Caco-2 (cell line): ENCODE measurements at regions of chr6 and their contacts with region 1.

Region 1: DNA sequence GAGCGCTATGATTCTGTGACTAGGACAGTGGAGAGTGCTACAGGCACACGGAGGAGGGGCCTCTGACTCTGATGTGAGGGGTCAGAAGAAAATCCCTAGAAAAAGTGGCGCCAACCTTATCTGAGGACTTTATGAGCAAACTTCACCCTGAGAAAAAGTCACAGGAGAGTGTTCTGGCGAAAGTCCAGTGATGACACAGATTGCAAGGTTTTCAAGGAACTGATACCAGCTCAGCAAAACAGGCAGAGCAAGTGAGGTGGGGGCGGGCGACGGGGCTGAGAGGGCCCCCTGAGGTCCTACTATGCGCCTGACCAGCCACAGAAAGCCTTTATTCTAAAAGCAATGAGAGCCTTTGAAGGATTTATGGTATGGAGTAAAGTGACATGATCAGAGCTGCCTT is 73.3 kb downstream of the SLC22A23 start:
- DNase-seq: peak; percentile 80
- H3K4me3 ChIP-seq: no peak overlapping the region
- H3K4me3 Mint-ChIP-seq: peak overlapping the region; percentile 10
- H3K27ac Mint-ChIP-seq: peak overlapping the region; percentile 73
- H3K4me1 ChIP-seq: peaks cover 70% of the 10 kb centered on the region
- H3K4me1 Mint-ChIP-seq: peaks cover 61% of the 10 kb centered on the region
- H3K27me3 ChIP-seq: no peaks in the 10 kb centered on the region
- H3K27me3 Mint-ChIP-seq: no peaks in the 10 kb centered on the region
- CTCF ChIP-seq: no peak

Region 2: GRCh38 chr6:3351105-3351676 is 32.3 kb before region 1 on chr6:
- CTCF ChIA-PET with region 1: no interaction called
- POLR2A ChIA-PET with region 1: no interaction called
- intact Hi-C with region 1: no loop called
- DNase-seq: no peak
- H3K4me3 ChIP-seq: no peak overlapping the region
- H3K4me3 Mint-ChIP-seq: no peak overlapping the region
- H3K27ac Mint-ChIP-seq: no peak overlapping the region
- H3K4me1 ChIP-seq: peaks cover 2% of the 10 kb centered on the region
- H3K4me1 Mint-ChIP-seq: peaks cover 7% of the 10 kb centered on the region
- H3K27me3 ChIP-seq: no peaks in the 10 kb centered on the region
- H3K27me3 Mint-ChIP-seq: no peaks in the 10 kb centered on the region
- CTCF ChIP-seq: no peak

Region 3: GRCh38 chr6:3393836-3394202 is 10.3 kb after region 1 on chr6:
- CTCF ChIA-PET with region 1: no interaction called
- POLR2A ChIA-PET with region 1: no interaction called
- intact Hi-C with region 1: loop called (anchors 1 kb)
- DNase-seq: no peak
- H3K4me3 ChIP-seq: no peak overlapping the region
- H3K4me3 Mint-ChIP-seq: no peak overlapping the region
- H3K27ac Mint-ChIP-seq: no peak overlapping the region
- H3K4me1 ChIP-seq: peaks cover 44% of the 10 kb centered on the region
- H3K4me1 Mint-ChIP-seq: peaks cover 14% of the 10 kb centered on the region
- H3K27me3 ChIP-seq: no peaks in the 10 kb centered on the region
- H3K27me3 Mint-ChIP-seq: no peaks in the 10 kb centered on the region
- CTCF ChIP-seq: no peak

Region 4: GRCh38 chr6:3403238-3404173 is 20.0 kb after region 1 on chr6:
- CTCF ChIA-PET with region 1: interaction called, 5 read pairs
- POLR2A ChIA-PET with region 1: interaction called, 14 read pairs
- intact Hi-C with region 1: loop called (anchors 1 kb)
- DNase-seq: peak; percentile 92 to 95
- H3K4me3 ChIP-seq: no peak overlapping the region
- H3K4me3 Mint-ChIP-seq: peak overlapping the region; percentile 63
- H3K27ac Mint-ChIP-seq: peak overlapping the region; percentile 88
- H3K4me1 ChIP-seq: peaks cover 90% of the 10 kb centered on the region
- H3K4me1 Mint-ChIP-seq: peaks cover 63% of the 10 kb centered on the region
- H3K27me3 ChIP-seq: no peaks in the 10 kb centered on the region
- H3K27me3 Mint-ChIP-seq: no peaks in the 10 kb centered on the region
- CTCF ChIP-seq: no peak

Region 5: DNA sequence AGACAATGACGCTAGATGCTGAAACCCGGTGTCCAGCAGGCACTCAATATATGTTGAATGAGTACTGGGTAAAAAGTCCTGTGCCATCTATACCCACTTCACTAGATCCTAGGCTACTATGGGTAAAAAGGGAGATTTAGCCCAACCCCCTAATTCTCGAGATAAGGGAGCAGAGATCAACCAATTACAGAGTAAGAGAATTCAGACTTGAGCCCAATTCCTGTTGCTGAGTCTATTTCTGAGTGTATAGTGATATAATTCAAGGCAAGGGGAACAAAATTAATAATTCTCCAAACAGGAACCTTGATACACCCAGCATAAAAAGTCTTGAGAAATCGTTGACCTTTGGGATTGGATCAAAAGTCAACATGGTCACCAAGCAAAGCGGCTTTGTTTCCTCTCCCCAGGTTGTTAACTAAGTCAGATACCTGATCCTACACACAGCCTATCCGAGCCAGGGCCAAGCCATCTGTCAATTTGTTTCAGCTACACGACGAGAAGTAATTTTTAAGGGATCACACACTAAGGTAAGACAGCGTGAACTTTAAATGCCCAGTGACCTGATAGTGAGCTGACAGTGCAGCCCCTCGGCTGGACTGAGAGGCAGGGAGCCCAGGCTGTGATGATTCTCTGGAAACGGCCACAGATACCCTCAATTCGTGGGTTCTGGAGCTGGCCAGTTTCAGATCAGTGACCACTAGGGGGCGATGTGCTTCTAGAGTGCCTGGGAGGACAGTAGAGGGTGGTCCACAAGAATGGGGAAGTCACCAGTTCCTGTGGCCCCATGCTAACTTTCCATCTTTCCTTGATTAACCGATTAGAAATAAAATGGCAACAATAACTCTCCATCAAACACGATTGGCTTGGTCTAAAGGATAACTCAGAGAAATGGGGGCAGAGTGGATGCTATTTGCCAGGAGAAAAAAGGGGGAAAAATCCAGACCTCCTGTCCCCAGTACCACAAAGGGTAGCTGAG is 27.1 kb after region 1 on chr6:
- CTCF ChIA-PET with region 1: interaction called, 3 read pairs
- POLR2A ChIA-PET with region 1: interaction called, 6 read pairs
- intact Hi-C with region 1: loop called (anchors 1 kb)
- DNase-seq: peak; percentile 78
- H3K4me3 ChIP-seq: peak overlapping the region; percentile 20
- H3K4me3 Mint-ChIP-seq: peak overlapping the region; percentile 47
- H3K27ac Mint-ChIP-seq: peak overlapping the region; percentile 86
- H3K4me1 ChIP-seq: peaks cover 88% of the 10 kb centered on the region
- H3K4me1 Mint-ChIP-seq: peaks cover 62% of the 10 kb centered on the region
- H3K27me3 ChIP-seq: no peaks in the 10 kb centered on the region
- H3K27me3 Mint-ChIP-seq: no peaks in the 10 kb centered on the region
- CTCF ChIP-seq: peak; percentile 77 to 79